ENCODE measurements at regions of chr22 and their contacts with region 1.

Region 1: GRCh38 chr22:44272401-44272771 is 40.4 kb downstream of the SHISAL1 start:
- DNase-seq: peak in 1 of 5 donors; percentile 12
- H3K4me3 ChIP-seq: no peak overlapping the region
- H3K27ac ChIP-seq: no peak overlapping the region
- H3K4me1 ChIP-seq: no peaks in the 10 kb centered on the region
- H3K27me3 ChIP-seq: no peaks in the 10 kb centered on the region
- CTCF ChIP-seq: no peak
- EP300 ChIP-seq: no peak
- POLR2A ChIP-seq: no peak

Region 2: DNA sequence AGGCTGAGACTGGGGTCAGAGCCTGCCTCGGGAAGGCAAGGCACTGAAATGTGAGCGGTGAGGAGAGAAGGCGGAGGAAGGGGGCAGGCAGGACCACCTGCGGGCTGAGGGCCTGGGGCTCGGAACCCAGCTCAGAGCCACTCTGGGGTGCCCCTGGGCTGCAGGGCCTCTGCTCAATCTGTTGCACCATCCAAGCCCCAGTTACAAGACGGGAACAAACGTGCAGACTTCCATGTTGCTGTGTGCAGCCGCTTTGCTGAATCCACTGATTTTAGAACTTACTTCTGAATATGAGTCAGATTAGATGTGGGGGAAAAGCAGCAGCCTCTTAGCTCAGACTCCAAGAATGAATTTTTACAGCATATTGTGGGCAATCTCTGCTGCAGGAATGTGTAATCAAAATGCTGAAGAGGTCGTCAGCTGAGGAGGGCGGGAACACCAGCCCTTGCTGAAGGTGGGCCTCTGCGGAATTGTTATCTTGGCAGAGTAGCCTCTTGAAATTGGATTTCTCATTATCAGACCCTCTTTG is 70.1 kb before region 1 on chr22:
- intact Hi-C with region 1: no loop called
- DNase-seq: peak in 1 of 5 donors; percentile 12
- H3K4me3 ChIP-seq: no peak overlapping the region
- H3K27ac ChIP-seq: no peak overlapping the region
- H3K4me1 ChIP-seq: no peaks in the 10 kb centered on the region
- H3K27me3 ChIP-seq: no peaks in the 10 kb centered on the region
- CTCF ChIP-seq: no peak
- EP300 ChIP-seq: no peak
- POLR2A ChIP-seq: no peak

Region 3: GRCh38 chr22:44224166-44224565 is 48.2 kb before region 1 on chr22:
- intact Hi-C with region 1: no loop called
- DNase-seq: peak in 1 of 5 donors; percentile 2
- H3K4me3 ChIP-seq: no peak overlapping the region
- H3K27ac ChIP-seq: no peak overlapping the region
- H3K4me1 ChIP-seq: no peaks in the 10 kb centered on the region
- H3K27me3 ChIP-seq: no peaks in the 10 kb centered on the region
- CTCF ChIP-seq: no peak
- EP300 ChIP-seq: no peak
- POLR2A ChIP-seq: no peak

Region 4: GRCh38 chr22:44256556-44257485 is 15.6 kb before region 1 on chr22:
- intact Hi-C with region 1: no loop called
- DNase-seq: no peak
- H3K4me3 ChIP-seq: no peak overlapping the region
- H3K27ac ChIP-seq: no peak overlapping the region
- H3K4me1 ChIP-seq: no peaks in the 10 kb centered on the region
- H3K27me3 ChIP-seq: no peaks in the 10 kb centered on the region
- CTCF ChIP-seq: no peak
- EP300 ChIP-seq: no peak
- POLR2A ChIP-seq: no peak

Region 5: GRCh38 chr22:44380756-44381470 is 108.5 kb after region 1 on chr22:
- intact Hi-C with region 1: loop called in 1 of 4 experiments (anchors 10 kb)
- DNase-seq: peak in 2 of 5 donors; percentile 6 to 38
- H3K4me3 ChIP-seq: no peak overlapping the region
- H3K27ac ChIP-seq: no peak overlapping the region
- H3K4me1 ChIP-seq: no peaks in the 10 kb centered on the region
- H3K27me3 ChIP-seq: no peaks in the 10 kb centered on the region
- CTCF ChIP-seq: no peak
- EP300 ChIP-seq: no peak
- POLR2A ChIP-seq: no peak

Measured in ovary (tissue), 10 donors.